ENCODE measurements at regions of chr1 and their contacts with region 1.

Region 1: GRCh38 chr1:215566556-215567490 is at the start of gene KCTD3:
- DNase-seq: peak; percentile 57 to 77
- H3K4me3 ChIP-seq: peak within 1 kb of the TSS; percentile 68
- H3K27ac ChIP-seq: peak within 1 kb of the TSS; percentile 75
- H3K4me1 ChIP-seq: peaks cover 37% of the 10 kb centered on the region
- H3K27me3 ChIP-seq: no peaks in the 10 kb centered on the region
- CTCF ChIP-seq: no peak
- total RNA-seq, gene KCTD3: 46.4 and 53.6 TPM in 2 replicates

Region 2: DNA sequence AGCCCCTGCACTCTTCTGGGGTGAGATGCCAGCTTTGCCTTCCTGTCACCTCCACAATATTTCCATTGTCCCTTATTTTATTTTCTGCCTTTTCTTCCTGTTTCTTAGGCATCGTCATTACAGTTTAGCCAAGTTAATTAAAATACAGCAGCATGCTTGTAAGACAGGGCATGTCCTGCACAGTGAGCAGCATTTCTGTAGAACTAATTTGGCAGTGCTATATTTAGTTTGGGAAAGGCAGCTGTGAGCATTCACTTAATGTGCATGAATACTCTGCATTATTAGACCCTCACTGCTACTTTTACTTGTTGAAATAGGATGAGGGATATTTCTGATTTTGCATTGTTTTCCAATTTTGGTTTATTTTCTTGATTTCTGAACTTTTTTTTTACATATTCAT is 351.0 kb before region 1 on chr1:
- CTCF ChIA-PET with region 1: interaction called, 10 read pairs
- POLR2A ChIA-PET with region 1: no interaction called
- intact Hi-C with region 1: no loop called
- DNase-seq: no peak
- H3K4me3 ChIP-seq: no peak overlapping the region
- H3K27ac ChIP-seq: no peak overlapping the region
- H3K4me1 ChIP-seq: no peaks in the 10 kb centered on the region
- H3K27me3 ChIP-seq: no peaks in the 10 kb centered on the region
- CTCF ChIP-seq: no peak

Region 3: DNA sequence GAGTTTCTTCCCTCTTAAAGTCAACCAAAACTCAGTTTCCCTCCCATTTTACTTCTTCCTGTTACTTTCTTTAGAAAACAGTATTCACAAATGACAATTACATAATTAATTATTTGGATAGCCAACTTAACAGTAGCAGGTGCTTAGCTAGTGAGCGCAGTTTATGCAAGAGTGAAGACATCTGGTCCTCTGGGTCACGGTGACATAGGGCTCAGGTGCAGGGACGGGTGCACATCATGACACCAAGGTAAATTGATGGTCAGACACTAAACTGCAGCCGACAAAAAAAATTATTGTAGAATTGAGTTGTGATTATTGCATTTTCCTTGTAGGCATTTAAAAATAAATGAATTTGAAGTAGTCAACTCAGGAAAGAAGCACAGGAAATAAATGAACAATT is 141.7 kb before region 1 on chr1:
- CTCF ChIA-PET with region 1: no interaction called
- POLR2A ChIA-PET with region 1: interaction called, 18 read pairs
- intact Hi-C with region 1: no loop called
- DNase-seq: no peak
- H3K4me3 ChIP-seq: no peak overlapping the region
- H3K27ac ChIP-seq: no peak overlapping the region
- H3K4me1 ChIP-seq: no peaks in the 10 kb centered on the region
- H3K27me3 ChIP-seq: no peaks in the 10 kb centered on the region
- CTCF ChIP-seq: no peak

Region 4: GRCh38 chr1:215529111-215529510 is 37.7 kb before region 1 on chr1:
- CTCF ChIA-PET with region 1: no interaction called
- POLR2A ChIA-PET with region 1: no interaction called
- intact Hi-C with region 1: no loop called
- DNase-seq: no peak
- H3K4me3 ChIP-seq: no peak overlapping the region
- H3K27ac ChIP-seq: no peak overlapping the region
- H3K4me1 ChIP-seq: no peaks in the 10 kb centered on the region
- H3K27me3 ChIP-seq: no peaks in the 10 kb centered on the region
- CTCF ChIP-seq: no peak

Region 5: GRCh38 chr1:215583185-215583749 is 16.4 kb after region 1 on chr1:
- CTCF ChIA-PET with region 1: no interaction called
- POLR2A ChIA-PET with region 1: interaction called, 4 read pairs
- intact Hi-C with region 1: loop called (anchors 1 kb)
- DNase-seq: peak; percentile 69 to 93
- H3K4me3 ChIP-seq: peak overlapping the region; percentile 49
- H3K27ac ChIP-seq: peak overlapping the region; percentile 91
- H3K4me1 ChIP-seq: peaks cover 46% of the 10 kb centered on the region
- H3K27me3 ChIP-seq: no peaks in the 10 kb centered on the region
- CTCF ChIP-seq: no peak